Activated CD4-positive, alpha-beta T cell treated with anti-CD3 and anti-CD28 coated beads for 36 hours (primary cell): ENCODE measurements at regions of chr17 and their contacts with region 1.

Region 1: DNA sequence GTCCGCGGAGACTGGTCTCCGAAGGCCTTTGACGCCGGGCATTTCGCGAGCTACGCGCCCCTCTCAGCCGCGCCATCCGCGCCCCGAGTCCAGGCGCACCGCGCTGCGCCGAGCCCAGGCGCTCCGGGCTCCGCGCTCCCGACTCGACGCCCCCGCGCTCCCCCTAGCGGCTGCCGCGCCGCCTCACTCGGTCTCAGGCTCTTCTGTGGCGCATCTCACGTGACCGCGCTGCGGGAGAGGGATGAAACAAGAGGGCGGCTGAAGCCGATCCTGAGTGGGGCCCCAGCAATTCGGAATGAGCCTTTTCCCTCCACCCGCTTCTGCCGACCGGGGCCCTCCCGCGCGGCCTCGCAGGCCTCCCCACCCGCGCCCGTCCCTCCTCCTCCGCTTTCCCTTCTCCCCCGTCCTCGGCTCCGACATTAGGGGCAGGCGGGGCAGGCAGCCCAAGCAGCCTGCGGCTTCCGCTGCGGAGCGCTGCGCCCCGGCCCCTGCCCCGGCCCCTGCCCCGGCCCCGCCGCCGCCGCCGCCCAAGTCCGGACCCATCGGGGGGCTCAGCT is 42.5 kb upstream of the AMZ2 start:
- DNase-seq: peak; percentile 96
- ATAC-seq: peak; percentile 87
- H3K4me3 Mint-ChIP-seq: peak overlapping the region; percentile 93
- H3K27ac Mint-ChIP-seq: peak overlapping the region; percentile 78
- H3K4me1 Mint-ChIP-seq: peaks cover 27% of the 10 kb centered on the region
- H3K27me3 Mint-ChIP-seq: peaks cover 7% of the 10 kb centered on the region

Region 2: DNA sequence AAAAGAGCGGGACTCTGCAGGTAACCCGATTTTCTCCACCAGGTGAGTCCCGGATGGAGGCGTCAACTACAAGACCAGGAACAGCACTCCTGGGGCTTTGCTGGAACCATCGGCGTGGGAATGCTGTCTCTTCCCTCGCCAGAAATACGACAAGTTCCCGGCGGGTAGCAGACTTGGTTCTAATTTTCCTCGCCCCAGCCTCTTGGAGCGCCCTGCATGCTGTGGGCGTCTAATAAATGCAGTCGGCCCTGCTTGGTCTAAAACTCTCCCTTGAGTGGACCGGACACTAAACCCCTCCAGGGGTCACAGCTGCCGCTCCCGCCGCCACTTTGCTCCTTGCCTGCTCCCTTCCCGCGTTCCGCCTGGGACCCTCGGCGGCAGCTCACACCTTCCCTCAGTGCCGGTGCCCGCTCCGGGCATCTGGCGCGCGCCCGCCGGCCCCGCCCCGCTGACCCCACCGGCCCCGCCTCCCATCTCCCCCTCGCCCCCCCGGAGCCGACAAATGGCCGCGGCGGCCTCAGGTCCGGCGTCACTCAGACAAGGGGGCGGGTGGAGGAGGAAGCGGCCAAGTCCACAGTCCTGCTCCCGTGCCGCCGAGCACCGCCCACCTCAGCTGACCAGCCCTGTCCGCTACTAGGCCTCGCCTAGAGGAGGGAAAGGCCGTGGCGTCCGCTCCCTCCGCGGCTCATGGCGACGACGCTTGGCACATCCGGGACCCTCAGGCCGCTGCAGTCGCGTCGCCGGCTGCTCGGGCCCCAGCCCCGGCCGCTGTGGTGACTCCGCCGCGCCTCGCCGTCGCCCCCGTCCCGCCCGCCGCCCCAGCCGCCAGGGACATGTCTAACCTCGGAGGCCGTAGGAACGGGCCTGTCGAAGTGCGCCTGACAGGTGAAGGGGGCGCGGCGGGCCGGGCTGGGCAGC is 104.0 kb before region 1 on chr17:
- CTCF ChIA-PET with region 1: no interaction called
- POLR2A ChIA-PET with region 1: no interaction called
- intact Hi-C with region 1: loop called in 1 of 2 experiments (anchors 5 kb)
- DNase-seq: peak; percentile 71
- ATAC-seq: peak; percentile 63
- H3K4me3 Mint-ChIP-seq: peak overlapping the region; percentile 87
- H3K27ac Mint-ChIP-seq: peak overlapping the region; percentile 91
- H3K4me1 Mint-ChIP-seq: peaks cover 31% of the 10 kb centered on the region
- H3K27me3 Mint-ChIP-seq: no peaks in the 10 kb centered on the region

Region 3: GRCh38 chr17:68184816-68185436 is 20.4 kb before region 1 on chr17:
- CTCF ChIA-PET with region 1: interaction called, 67 read pairs
- POLR2A ChIA-PET with region 1: interaction called, 7 read pairs
- intact Hi-C with region 1: no loop called
- DNase-seq: peak; percentile 75
- ATAC-seq: peak; percentile 83
- H3K4me3 Mint-ChIP-seq: peak overlapping the region; percentile 9
- H3K27ac Mint-ChIP-seq: peak overlapping the region; percentile 58
- H3K4me1 Mint-ChIP-seq: peaks cover 55% of the 10 kb centered on the region
- H3K27me3 Mint-ChIP-seq: no peaks in the 10 kb centered on the region

Region 4: GRCh38 chr17:68247445-68248198 is 42.3 kb after region 1 on chr17 and contains the start of gene AMZ2:
- CTCF ChIA-PET with region 1: interaction called, 12 read pairs
- POLR2A ChIA-PET with region 1: interaction called, 6 read pairs
- intact Hi-C with region 1: loop called (anchors 1 to 2 kb)
- DNase-seq: peak; percentile 98
- ATAC-seq: peak; percentile 84
- H3K4me3 Mint-ChIP-seq: peak within 1 kb of the TSS; percentile 88
- H3K27ac Mint-ChIP-seq: peak within 1 kb of the TSS; percentile 99
- H3K4me1 Mint-ChIP-seq: peaks cover 37% of the 10 kb centered on the region
- H3K27me3 Mint-ChIP-seq: no peaks in the 10 kb centered on the region
- total RNA-seq, gene AMZ2: 119 to 150 TPM

Region 5: DNA sequence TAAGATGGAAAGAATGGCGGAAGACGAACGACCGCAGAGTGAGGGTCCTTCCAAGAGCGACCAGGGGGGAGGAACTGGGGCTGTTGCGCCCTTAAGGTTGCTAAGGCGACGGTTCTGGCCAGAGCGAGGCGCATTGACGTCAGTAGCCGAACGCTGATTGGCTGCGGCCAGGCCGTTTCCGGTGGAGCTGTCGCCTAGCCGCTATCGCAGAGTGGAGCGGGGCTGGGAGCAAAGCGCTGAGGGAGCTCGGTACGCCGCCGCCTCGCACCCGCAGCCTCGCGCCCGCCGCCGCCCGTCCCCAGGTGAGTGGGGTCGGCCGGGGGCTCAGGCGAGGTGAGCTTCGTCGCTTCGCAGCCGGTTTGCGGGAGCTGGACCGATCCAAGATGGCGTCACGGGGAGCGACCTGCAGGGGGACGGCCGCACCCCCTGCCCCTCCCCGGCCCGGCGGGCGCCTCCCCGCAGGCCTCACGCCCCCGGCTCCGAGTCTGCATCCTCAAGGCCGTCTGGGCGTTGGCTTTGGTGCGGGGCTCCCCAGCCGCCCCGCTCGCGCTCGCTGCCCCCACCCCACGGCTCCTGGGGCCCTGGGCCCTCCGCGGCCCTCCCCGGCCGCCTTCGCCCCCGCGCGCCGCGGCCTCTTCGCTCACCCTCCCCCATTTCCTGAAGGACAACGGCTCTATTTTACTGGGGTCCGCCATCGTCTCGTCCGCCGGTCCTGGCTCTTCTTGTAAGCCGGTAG is 307.1 kb after region 1 on chr17 and contains the start of gene PRKAR1A:
- CTCF ChIA-PET with region 1: no interaction called
- POLR2A ChIA-PET with region 1: no interaction called
- intact Hi-C with region 1: loop called in 1 of 2 experiments (anchors 1 kb)
- DNase-seq: peak; percentile 95
- ATAC-seq: peak; percentile 92
- H3K4me3 Mint-ChIP-seq: peak within 1 kb of the TSS; percentile 93
- H3K27ac Mint-ChIP-seq: peak within 1 kb of the TSS; percentile 97
- H3K4me1 Mint-ChIP-seq: peaks cover 42% of the 10 kb centered on the region
- H3K27me3 Mint-ChIP-seq: no peaks in the 10 kb centered on the region
- total RNA-seq, gene PRKAR1A: 165 to 167 TPM